Activated CD8-positive, alpha-beta memory T cell treated with anti-CD3 and anti-CD28 coated beads, Interleukin-2, amount 10 ng/mL, durations not matched to agents 7 days and 5 days (primary cell): ENCODE measurements at regions of chr11 and their contacts with region 1.

Region 1: GRCh38 chr11:71977743-71978418 is 20.8 kb upstream of the IL18BP start:
- DNase-seq: peak; percentile 74
- ATAC-seq: peak; percentile 68
- H3K4me3 Mint-ChIP-seq: no peak overlapping the region
- H3K27ac Mint-ChIP-seq: no peak overlapping the region
- H3K4me1 Mint-ChIP-seq: no peaks in the 10 kb centered on the region
- H3K27me3 Mint-ChIP-seq: no peaks in the 10 kb centered on the region

Region 2: GRCh38 chr11:71962428-71963038 is 15.3 kb before region 1 on chr11:
- CTCF ChIA-PET with region 1: interaction called, 18 read pairs
- DNase-seq: no peak
- ATAC-seq: peak; percentile 81
- H3K4me3 Mint-ChIP-seq: no peak overlapping the region
- H3K27ac Mint-ChIP-seq: peak overlapping the region; percentile 56
- H3K4me1 Mint-ChIP-seq: peaks cover 13% of the 10 kb centered on the region
- H3K27me3 Mint-ChIP-seq: no peaks in the 10 kb centered on the region

Region 3: GRCh38 chr11:71998662-71999310 is 20.9 kb after region 1 on chr11 and contains the start of gene IL18BP:
- CTCF ChIA-PET with region 1: interaction called, 11 read pairs
- DNase-seq: peak; percentile 72
- ATAC-seq: peak; percentile 83
- H3K4me3 Mint-ChIP-seq: peak within 1 kb of the TSS; percentile 69
- H3K27ac Mint-ChIP-seq: peak within 1 kb of the TSS; percentile 93
- H3K4me1 Mint-ChIP-seq: peaks cover 19% of the 10 kb centered on the region
- H3K27me3 Mint-ChIP-seq: no peaks in the 10 kb centered on the region
- total RNA-seq, gene IL18BP: 7.0 to 11.2 TPM

Region 4: GRCh38 chr11:72015511-72016171 is 37.8 kb after region 1 on chr11:
- CTCF ChIA-PET with region 1: interaction called, 14 read pairs
- DNase-seq: no peak
- ATAC-seq: no peak
- H3K4me3 Mint-ChIP-seq: no peak overlapping the region
- H3K27ac Mint-ChIP-seq: no peak overlapping the region
- H3K4me1 Mint-ChIP-seq: no peaks in the 10 kb centered on the region
- H3K27me3 Mint-ChIP-seq: no peaks in the 10 kb centered on the region

Region 5: GRCh38 chr11:72069787-72070251 is 91.9 kb after region 1 on chr11:
- CTCF ChIA-PET with region 1: no interaction called
- DNase-seq: no peak
- ATAC-seq: no peak
- H3K4me3 Mint-ChIP-seq: no peak overlapping the region
- H3K27ac Mint-ChIP-seq: peak overlapping the region; percentile 52
- H3K4me1 Mint-ChIP-seq: peaks cover 53% of the 10 kb centered on the region
- H3K27me3 Mint-ChIP-seq: no peaks in the 10 kb centered on the region

Region 6: GRCh38 chr11:72091005-72091691 is 113.3 kb after region 1 on chr11:
- CTCF ChIA-PET with region 1: interaction called, 22 read pairs
- DNase-seq: peak; percentile 72
- ATAC-seq: peak; percentile 83
- H3K4me3 Mint-ChIP-seq: no peak overlapping the region
- H3K27ac Mint-ChIP-seq: no peak overlapping the region
- H3K4me1 Mint-ChIP-seq: peaks cover 5% of the 10 kb centered on the region
- H3K27me3 Mint-ChIP-seq: no peaks in the 10 kb centered on the region

Region 7: DNA sequence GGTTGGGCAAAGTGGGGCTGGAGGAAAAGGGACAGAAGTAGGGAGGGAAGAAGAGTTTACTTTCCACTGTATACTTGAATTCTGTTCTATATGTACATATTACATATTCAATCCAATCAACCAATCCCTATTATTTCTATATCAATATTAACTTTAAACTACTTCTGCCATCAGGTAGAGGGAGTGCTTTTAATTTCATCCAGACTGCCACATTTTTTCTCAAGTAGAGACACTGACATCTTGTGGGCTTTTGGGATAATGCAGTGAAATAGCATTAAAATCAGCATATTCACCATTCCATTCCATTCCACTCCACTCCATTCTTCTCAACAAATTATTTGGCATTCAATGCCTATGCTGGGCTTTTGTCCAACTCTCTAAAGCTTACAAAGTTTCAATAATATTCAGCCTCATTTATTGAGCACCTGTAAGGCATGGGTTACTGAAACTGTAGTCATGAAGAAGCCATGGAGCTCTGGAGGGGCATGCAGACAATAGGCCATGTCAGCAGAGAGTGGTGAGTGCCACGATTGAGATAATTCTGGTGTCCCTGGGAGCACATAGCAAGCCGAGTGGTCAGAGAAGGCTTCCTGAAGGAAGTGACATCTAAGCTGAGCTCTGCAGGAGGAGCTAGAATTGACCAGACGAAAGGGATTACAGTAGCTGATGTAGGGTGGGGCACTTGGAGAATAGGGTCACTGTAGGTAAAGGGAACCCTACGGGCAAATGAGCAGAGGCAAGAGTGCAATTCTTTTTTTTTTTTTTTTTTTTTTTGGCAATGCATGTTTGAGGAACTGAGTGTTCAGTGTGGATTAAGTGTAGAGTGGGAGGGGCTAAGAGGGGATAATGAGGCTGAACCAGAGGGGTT is 469.3 kb after region 1 on chr11:
- CTCF ChIA-PET with region 1: interaction called, 11 read pairs
- DNase-seq: no peak
- ATAC-seq: peak; percentile 64
- H3K4me3 Mint-ChIP-seq: no peak overlapping the region
- H3K27ac Mint-ChIP-seq: no peak overlapping the region
- H3K4me1 Mint-ChIP-seq: peaks cover under 1% of the 10 kb centered on the region
- H3K27me3 Mint-ChIP-seq: peaks cover 24% of the 10 kb centered on the region